ENCODE measurements at regions of chr11 and their contacts with region 1.

Region 1: GRCh38 chr11:118572061-118572980 is at the start of gene ARCN1:
- DNase-seq: peak; percentile 70
- H3K4me3 Mint-ChIP-seq: peak within 1 kb of the TSS; percentile 84
- H3K27ac Mint-ChIP-seq: peak within 1 kb of the TSS; percentile 81
- H3K4me1 Mint-ChIP-seq: peaks cover 20% of the 10 kb centered on the region
- H3K27me3 Mint-ChIP-seq: no peaks in the 10 kb centered on the region
- CTCF ChIP-seq: no peak
- total RNA-seq, gene ARCN1: 157 and 164 TPM in 2 replicates

Region 2: GRCh38 chr11:118621071-118621783 is 48.9 kb after region 1 on chr11:
- CTCF ChIA-PET with region 1: interaction called, 3 read pairs
- POLR2A ChIA-PET with region 1: interaction called, 25 read pairs
- intact Hi-C with region 1: no loop called
- DNase-seq: peak; percentile 89
- H3K4me3 Mint-ChIP-seq: peak overlapping the region; percentile 71
- H3K27ac Mint-ChIP-seq: peak overlapping the region; percentile 38
- H3K4me1 Mint-ChIP-seq: peaks cover 73% of the 10 kb centered on the region
- H3K27me3 Mint-ChIP-seq: no peaks in the 10 kb centered on the region
- CTCF ChIP-seq: no peak

Measured in MCF 10A (cell line).